ENCODE measurements at regions of chr22 and their contacts with region 1.

Region 1: DNA sequence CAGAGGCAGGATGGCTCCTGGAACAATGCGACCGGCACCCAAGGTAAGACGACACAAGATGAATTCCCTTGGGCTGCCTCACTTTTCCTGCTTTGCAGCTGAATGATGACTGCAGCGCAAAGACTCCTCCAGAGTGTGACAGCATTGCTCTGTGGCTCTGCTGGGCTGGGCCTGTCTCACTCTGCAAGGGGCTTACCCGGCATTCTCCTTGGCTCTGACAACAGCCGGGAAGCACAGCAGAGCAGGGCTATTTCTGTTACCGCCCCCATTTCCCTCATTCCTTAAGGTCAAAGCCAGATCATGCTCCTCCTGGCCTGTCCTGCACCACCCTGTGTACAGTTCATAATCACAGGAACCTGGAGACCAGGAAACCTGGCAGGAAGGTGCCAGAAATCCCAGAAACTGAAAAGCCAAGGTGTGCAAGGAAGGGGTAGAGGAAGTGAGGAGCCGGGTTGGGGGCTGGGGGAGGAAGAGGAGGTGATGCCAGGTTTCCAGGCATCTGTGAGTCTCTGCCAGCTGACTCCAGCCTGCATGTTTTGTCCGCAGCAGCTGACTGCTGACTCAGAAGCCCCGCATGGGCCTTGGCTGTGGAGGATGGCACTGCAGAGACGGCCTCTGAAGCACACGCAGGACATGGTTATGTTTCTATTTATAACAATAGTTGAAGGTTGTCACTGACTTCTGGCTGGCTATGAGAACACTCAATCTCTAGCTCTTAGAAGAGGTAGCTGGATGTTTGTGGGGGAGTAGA is 113.6 kb downstream of the MICAL3 start:
- DNase-seq: peak; percentile 71 to 77 (median 73)
- H3K4me3 ChIP-seq: no peak overlapping the region
- H3K27ac ChIP-seq: peak overlapping the region in 1 of 2 donors; percentile 54
- H3K4me1 ChIP-seq: peaks cover 12% of the 10 kb centered on the region
- H3K27me3 ChIP-seq: no peaks in the 10 kb centered on the region
- CTCF ChIP-seq: peak in 2 of 3 donors; percentile 4 to 11
- EP300 ChIP-seq: peak; percentile 27
- POLR2A ChIP-seq: no peak

Region 2: GRCh38 chr22:17842386-17842785 is 68.3 kb before region 1 on chr22:
- intact Hi-C with region 1: loop called in 1 of 4 experiments (anchors 10 kb)
- DNase-seq: peak; percentile 78 to 87 (median 84)
- H3K4me3 ChIP-seq: peak overlapping the region; percentile 25
- H3K27ac ChIP-seq: peak overlapping the region; percentile 30 to 52
- H3K4me1 ChIP-seq: peaks cover 23% of the 10 kb centered on the region
- H3K27me3 ChIP-seq: no peaks in the 10 kb centered on the region
- CTCF ChIP-seq: no peak
- EP300 ChIP-seq: no peak
- POLR2A ChIP-seq: no peak

Region 3: GRCh38 chr22:17876306-17876831 is 34.4 kb before region 1 on chr22:
- intact Hi-C with region 1: no loop called
- DNase-seq: peak in 1 of 5 donors; percentile 34
- H3K4me3 ChIP-seq: no peak overlapping the region
- H3K27ac ChIP-seq: no peak overlapping the region
- H3K4me1 ChIP-seq: no peaks in the 10 kb centered on the region
- H3K27me3 ChIP-seq: no peaks in the 10 kb centered on the region
- CTCF ChIP-seq: no peak
- EP300 ChIP-seq: no peak
- POLR2A ChIP-seq: no peak

Measured in ovary (tissue), 10 donors.